ENCODE measurements at regions of chr11 and their contacts with region 1.

Region 1: GRCh38 chr11:10307442-10308207 is 2.8 kb downstream of the ADM start:
- DNase-seq: peak; percentile 80 to 87
- ATAC-seq: peak; percentile 64 to 75 (median 70)
- H3K4me3 ChIP-seq: peak overlapping the region; percentile 59 to 89 (median 72)
- H3K27ac ChIP-seq: peak overlapping the region in 9 of 10 donors; percentile 64 to 92 (median 84)
- H3K4me1 ChIP-seq: peaks cover 11 to 71% (median 55%) of the 10 kb centered on the region in 9 donors
- H3K27me3 ChIP-seq: peaks cover 0 to 16% (median 0%) of the 10 kb centered on the region in 7 donors
- CTCF ChIP-seq: peak; percentile 88 to 100 (median 99)

Region 2: DNA sequence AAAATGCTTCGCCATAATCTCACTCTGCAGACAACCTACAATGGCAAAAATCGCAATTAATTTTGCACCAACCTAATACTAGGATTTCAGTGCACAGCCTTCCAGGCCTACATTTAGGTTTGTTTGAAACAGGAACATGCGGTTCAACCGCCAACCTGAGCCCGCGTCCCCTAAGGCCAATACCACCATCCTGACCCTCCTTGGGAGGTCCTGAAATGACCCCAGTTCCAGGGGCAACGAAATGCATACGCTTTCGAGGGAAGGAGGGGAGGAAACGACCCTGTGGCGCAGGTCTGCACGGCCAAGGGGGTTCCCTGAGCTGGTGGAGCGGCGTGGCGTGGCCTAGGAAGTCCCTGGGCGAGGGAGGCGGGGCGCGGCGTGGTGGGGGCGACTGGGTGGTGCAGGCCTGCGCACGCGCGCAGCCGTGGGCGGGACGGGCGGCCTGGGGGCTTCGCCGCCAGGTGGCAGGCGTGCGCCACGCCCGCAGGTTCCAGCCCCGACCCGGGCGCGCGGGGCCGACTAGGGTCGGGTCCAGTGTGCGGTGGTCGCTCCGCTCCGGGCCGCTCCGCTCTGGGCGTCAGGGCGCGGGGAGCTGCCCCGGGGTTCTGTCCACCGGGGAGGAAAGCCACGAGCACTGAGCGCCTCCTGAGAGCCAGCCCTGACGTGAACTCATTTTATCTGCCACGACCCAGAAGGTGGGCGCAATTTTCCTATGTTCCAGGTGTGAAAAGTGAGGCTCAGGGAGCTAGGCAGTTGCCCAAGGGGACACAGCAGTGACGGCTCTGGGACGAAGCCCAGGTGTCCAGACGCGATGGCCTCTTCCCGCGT is 549.6 kb before region 1 on chr11:
- intact Hi-C with region 1: loop called in 9 of 10 experiments (anchors 2 to 5 kb)
- DNase-seq: peak; percentile 89 to 92
- ATAC-seq: peak; percentile 52 to 89 (median 75)
- H3K4me3 ChIP-seq: peak overlapping the region; percentile 50 to 86 (median 74)
- H3K27ac ChIP-seq: peak overlapping the region; percentile 57 to 97 (median 94)
- H3K4me1 ChIP-seq: peaks cover 14 to 76% (median 53%) of the 10 kb centered on the region in 9 donors
- H3K27me3 ChIP-seq: no peaks in the 10 kb centered on the region
- CTCF ChIP-seq: peak; percentile 69 to 96 (median 91)

Region 3: GRCh38 chr11:9972989-9973388 is 334.6 kb before region 1 on chr11:
- intact Hi-C with region 1: loop called in 8 of 10 experiments (anchors 5 to 10 kb)
- DNase-seq: peak in 1 of 2 donors; percentile 9
- ATAC-seq: peak; percentile 47 to 82 (median 71)
- H3K4me3 ChIP-seq: no peak overlapping the region
- H3K27ac ChIP-seq: no peak overlapping the region
- H3K4me1 ChIP-seq: peaks cover 0 to 22% (median 16%) of the 10 kb centered on the region in 9 donors
- H3K27me3 ChIP-seq: no peaks in the 10 kb centered on the region
- CTCF ChIP-seq: peak; percentile 40 to 82 (median 72)

Region 4: GRCh38 chr11:9990221-9990975 is 317.2 kb before region 1 on chr11:
- intact Hi-C with region 1: loop called in 2 of 10 experiments (anchors 5 kb)
- DNase-seq: no peak
- ATAC-seq: no peak
- H3K4me3 ChIP-seq: no peak overlapping the region
- H3K27ac ChIP-seq: no peak overlapping the region
- H3K4me1 ChIP-seq: no peaks in the 10 kb centered on the region
- H3K27me3 ChIP-seq: no peaks in the 10 kb centered on the region
- CTCF ChIP-seq: peak in 5 of 9 donors; percentile 11 to 41 (median 33)

Region 5: DNA sequence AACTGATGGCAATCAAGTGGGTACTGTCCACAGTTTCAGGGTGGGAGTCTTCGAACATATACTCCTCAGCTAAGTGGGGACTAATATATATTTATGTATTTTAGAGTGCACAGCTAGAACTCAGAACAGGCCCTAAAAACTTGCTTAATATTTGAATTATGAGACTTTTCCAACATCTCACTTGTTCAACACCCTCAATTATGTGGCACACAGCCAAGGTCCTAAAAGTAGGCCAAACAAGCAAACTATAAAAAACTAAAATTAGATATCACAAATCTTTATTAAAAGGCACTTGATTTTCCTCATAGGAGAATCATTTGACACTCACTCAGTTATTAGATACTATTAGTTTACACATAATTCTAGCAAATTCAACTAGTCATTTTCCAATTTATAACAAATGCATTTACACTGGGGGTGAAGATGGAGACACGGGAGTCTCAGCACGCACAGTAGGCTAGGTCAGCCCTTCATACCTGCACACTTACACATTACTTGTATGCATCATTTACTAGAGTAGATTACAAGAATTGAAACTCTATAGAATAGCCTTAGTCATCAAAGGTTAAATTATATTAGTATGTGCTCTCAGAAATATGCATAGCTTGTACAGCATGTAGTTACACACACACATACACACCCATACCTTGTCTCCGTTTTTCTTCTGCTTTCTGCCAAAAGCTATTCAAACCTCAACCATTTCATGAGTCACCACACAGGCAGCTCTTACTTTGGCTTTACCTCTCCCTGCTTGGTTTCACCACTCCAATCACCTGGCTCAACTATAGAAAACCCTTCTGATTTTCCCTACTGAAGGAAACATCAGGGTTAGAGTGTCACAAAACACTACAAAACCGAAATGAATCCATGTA is 185.1 kb before region 1 on chr11:
- intact Hi-C with region 1: loop called in 2 of 10 experiments (anchors 5 to 10 kb)
- DNase-seq: no peak
- ATAC-seq: peak in 1 of 8 donors; percentile 26
- H3K4me3 ChIP-seq: peak overlapping the region in 1 of 10 donors; percentile 0
- H3K27ac ChIP-seq: peak overlapping the region in 2 of 10 donors; percentile 10 to 33
- H3K4me1 ChIP-seq: peaks cover 0 to 66% (median 44%) of the 10 kb centered on the region in 9 donors
- H3K27me3 ChIP-seq: no peaks in the 10 kb centered on the region
- CTCF ChIP-seq: no peak

Region 6: DNA sequence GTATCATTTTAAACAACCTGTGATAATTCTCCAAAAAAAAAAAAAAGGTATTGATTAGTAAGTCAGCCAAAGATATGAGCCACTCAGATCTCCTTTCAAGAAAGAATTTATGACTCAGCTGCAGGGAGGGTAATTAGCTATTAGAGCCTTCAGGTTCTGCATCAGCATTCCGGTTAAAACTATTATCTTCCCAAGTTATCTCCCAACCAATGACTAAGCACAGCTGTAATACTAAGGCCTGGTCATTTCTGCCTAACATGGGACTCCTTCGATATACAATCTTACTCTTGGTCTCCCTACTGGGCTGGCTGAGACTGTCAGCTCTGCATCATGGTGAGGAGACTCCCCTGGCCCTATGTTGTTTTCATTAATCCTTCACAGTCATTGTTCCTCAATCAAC is 74.0 kb before region 1 on chr11:
- intact Hi-C with region 1: no loop called
- DNase-seq: no peak
- ATAC-seq: no peak
- H3K4me3 ChIP-seq: no peak overlapping the region
- H3K27ac ChIP-seq: no peak overlapping the region
- H3K4me1 ChIP-seq: peaks cover 0 to 11% (median 3%) of the 10 kb centered on the region in 9 donors
- H3K27me3 ChIP-seq: no peaks in the 10 kb centered on the region
- CTCF ChIP-seq: no peak

Region 7: DNA sequence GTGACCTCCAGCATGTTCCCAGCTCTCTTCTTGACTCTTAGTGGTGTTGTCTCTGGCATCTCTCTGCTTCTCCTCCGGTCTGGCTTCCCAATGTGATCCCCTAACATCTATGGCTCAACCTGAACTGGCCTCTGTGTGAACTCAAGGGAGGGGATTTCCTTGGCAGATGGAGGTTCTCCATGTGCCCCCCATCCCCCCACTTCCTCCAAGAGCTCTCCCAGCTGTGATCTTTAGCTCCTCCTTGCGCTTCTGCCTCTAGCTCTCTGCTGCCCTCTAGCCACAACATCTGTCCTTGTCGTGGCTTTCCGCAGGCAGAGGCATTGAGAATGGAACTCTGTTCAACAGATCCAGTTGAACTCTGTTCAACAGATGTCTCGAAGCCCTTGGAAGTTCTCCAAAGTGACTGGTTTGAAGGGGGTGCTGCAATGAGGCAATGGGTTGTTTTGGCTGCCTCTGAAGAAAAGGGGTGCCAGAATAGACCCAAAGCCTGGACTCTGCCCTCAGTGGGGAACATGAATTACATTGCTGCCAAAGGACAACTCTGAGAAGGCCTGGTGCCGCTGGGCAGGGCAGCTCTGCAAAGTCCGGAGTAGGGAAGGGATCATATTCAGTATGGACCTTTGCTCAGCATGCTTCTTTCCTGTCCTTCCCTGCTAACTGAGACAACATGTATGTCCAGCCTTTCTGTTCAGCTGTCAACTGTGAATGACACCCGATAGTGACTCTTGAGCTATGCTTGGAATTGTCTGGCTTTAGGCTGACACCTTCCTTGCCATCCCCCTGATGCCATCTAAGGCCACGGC is 59.1 kb after region 1 on chr11:
- intact Hi-C with region 1: loop called in 5 of 10 experiments (anchors 2 to 10 kb)
- DNase-seq: peak; percentile 68 to 90
- ATAC-seq: peak; percentile 87 to 98 (median 96)
- H3K4me3 ChIP-seq: no peak overlapping the region
- H3K27ac ChIP-seq: peak overlapping the region in 5 of 10 donors; percentile 3 to 56 (median 25)
- H3K4me1 ChIP-seq: peaks cover 0 to 11% (median 10%) of the 10 kb centered on the region in 9 donors
- H3K27me3 ChIP-seq: no peaks in the 10 kb centered on the region
- CTCF ChIP-seq: peak; percentile 63 to 93 (median 87)